ENCODE measurements at regions of chr2 and their contacts with region 1.

Region 1: DNA sequence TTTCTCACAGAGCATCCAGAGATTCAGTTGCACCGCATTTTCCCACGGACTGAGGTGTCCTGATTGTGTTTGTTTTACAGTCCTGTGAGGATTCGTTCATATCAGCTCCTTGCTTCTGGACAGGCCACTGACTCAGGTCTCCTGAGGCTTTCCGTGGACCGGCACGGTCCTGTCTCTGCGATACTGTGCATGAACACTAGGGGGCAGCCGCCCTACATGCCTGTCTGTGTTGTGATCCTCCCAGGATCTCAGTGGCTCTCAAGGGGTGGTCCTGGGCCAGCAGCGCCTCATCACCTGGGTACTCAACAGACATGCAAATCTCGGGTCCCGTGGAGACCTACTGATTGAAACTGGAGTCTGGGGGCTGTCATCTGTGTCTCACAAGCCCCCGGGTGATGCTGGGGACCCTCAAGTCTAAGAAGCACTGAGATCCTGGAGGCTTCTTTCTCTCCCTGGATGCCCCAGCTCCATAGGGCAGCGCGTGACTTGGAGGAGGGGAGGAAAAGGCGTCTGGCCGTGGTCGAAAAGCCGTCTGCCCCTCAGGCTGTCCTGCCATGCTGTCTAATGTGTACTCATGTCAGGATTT is 28.9 kb downstream of the IL1R2 start:
- DNase-seq: peak; percentile 91
- ATAC-seq: peak; percentile 64
- H3K4me3 ChIP-seq: no peak overlapping the region
- H3K27ac ChIP-seq: no peak overlapping the region
- H3K4me1 ChIP-seq: peaks cover 23% of the 10 kb centered on the region
- H3K27me3 ChIP-seq: no peaks in the 10 kb centered on the region
- CTCF ChIP-seq: peak; percentile 98

Region 2: DNA sequence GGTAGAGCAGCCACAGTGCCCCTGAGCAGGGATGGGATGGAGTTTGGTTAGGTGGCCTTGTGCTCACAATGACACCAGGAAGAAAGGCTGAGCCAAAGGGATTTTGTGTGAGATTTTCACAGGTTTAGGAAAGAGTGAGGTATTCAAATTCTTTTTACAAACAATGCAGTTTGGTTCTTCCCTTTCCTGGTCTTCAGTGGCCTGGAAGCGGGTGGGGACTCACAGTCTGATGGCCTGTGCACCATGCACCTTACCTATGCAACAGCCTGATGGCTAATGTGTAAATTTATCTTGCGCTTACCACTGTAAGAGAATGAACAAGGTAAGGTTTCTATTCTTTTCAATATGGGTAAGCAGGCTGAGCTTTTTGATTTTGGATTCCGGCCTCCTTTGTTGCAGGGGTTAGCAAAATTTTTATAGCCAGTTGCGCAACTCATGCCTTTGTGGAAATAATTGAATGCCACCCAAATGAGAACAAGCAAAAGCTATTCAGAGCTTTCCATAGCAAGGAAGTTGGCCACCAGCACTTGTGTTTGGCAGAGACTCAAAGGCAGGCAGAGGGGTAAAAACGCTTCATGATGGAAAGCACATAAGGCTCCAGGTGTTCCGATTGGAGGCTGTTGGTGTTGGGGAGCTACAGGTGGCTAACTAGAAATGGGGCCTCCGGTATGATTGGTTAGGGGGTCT is 52.7 kb before region 1 on chr2:
- CTCF ChIA-PET with region 1: no interaction called
- POLR2A ChIA-PET with region 1: no interaction called
- intact Hi-C with region 1: no loop called
- DNase-seq: peak; percentile 41
- ATAC-seq: no peak
- H3K4me3 ChIP-seq: no peak overlapping the region
- H3K27ac ChIP-seq: no peak overlapping the region
- H3K4me1 ChIP-seq: peaks cover 2% of the 10 kb centered on the region
- H3K27me3 ChIP-seq: no peaks in the 10 kb centered on the region
- CTCF ChIP-seq: no peak

Region 3: GRCh38 chr2:101983928-101984327 is 36.8 kb before region 1 on chr2:
- CTCF ChIA-PET with region 1: no interaction called
- POLR2A ChIA-PET with region 1: no interaction called
- intact Hi-C with region 1: loop called (anchors 1 kb)
- DNase-seq: peak; percentile 61
- ATAC-seq: peak; percentile 44
- H3K4me3 ChIP-seq: 0 out of 2 replicates have a peak overlapping the region, but pooled peaks have one; percentile 12
- H3K27ac ChIP-seq: peak overlapping the region; percentile 98
- H3K4me1 ChIP-seq: peaks cover 47% of the 10 kb centered on the region
- H3K27me3 ChIP-seq: no peaks in the 10 kb centered on the region
- CTCF ChIP-seq: peak; percentile 70

Region 4: GRCh38 chr2:102005989-102006885 is 14.5 kb before region 1 on chr2:
- CTCF ChIA-PET with region 1: interaction called, 4 read pairs
- POLR2A ChIA-PET with region 1: interaction called, 10 read pairs
- intact Hi-C with region 1: no loop called
- DNase-seq: peak; percentile 63
- ATAC-seq: peak; percentile 78
- H3K4me3 ChIP-seq: no peak overlapping the region
- H3K27ac ChIP-seq: no peak overlapping the region
- H3K4me1 ChIP-seq: peaks cover 15% of the 10 kb centered on the region
- H3K27me3 ChIP-seq: no peaks in the 10 kb centered on the region
- CTCF ChIP-seq: peak; percentile 83

Region 5: DNA sequence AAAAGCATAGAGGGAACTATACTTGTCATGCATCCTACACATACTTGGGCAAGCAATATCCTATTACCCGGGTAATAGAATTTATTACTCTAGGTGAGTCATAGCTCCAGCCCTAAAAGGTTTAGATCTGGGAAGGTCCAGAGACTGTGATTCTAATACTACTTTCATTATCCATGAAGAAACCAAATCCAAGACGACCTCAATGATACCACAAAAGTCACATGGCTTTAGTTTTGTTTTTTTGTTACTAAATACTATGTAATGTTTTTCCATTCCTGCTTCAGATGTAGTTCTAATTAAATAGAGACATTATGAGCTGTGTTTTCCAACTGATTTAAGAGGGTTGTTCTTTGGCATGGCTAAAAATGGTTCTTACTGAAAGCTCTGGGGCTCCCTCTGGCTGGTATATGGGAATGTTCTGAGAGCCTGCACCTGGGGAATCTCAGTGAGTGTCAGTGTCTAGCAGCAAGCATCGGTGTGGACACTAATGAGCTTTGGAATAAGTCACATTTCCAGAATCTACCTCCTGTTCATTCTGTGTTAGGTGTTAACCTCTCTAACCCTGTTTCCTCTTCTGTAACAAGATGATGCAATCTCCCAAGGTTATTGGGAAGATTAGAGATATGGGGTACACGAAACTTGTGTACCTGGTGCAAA is 145.6 kb after region 1 on chr2:
- CTCF ChIA-PET with region 1: interaction called, 29 read pairs
- POLR2A ChIA-PET with region 1: no interaction called
- intact Hi-C with region 1: loop called (anchors 1 kb)
- DNase-seq: peak; percentile 65
- ATAC-seq: peak; percentile 96
- H3K4me3 ChIP-seq: no peak overlapping the region
- H3K27ac ChIP-seq: 0 out of 2 replicates have a peak overlapping the region, but pooled peaks have one; percentile 6
- H3K4me1 ChIP-seq: peaks cover 15% of the 10 kb centered on the region
- H3K27me3 ChIP-seq: no peaks in the 10 kb centered on the region
- CTCF ChIP-seq: peak; percentile 79

Region 6: DNA sequence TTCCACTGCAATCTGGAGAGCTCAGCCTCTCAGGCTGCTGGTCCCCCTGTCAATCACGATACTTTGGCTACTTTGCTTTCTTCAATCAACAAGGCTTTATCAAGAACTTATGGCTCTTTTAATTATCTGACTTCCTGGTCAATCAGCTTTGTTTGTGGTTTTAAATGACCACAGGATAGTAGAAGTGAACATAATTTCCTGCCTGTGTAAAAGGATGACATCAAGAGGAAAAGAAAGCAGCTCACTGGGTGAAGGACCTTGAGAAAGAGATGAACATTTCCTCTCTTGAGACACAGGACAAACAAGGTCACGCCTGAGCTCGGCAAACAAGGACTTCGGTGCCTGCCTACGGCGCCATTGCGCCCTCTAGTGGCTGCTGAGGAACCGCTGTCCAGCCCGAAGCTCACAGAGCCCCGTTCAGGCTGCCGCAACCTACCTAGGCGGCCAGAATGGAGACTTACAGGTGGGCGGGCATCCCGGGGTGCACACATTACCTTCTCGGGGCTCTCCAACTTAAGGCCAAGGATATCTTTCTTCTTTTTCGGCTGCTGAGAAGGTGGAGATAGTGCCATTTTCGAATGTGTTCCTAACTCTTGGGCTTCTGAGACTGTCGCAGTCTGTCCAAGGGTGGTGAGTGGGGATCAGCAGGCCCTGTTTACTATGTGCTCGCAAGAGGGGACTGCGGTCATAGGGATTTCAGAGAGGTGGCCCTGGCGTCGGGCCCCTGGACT is 220.1 kb after region 1 on chr2:
- CTCF ChIA-PET with region 1: interaction called, 13 read pairs
- POLR2A ChIA-PET with region 1: no interaction called
- intact Hi-C with region 1: loop called (anchors 1 kb)
- DNase-seq: peak; percentile 91
- ATAC-seq: peak; percentile 97
- H3K4me3 ChIP-seq: no peak overlapping the region
- H3K27ac ChIP-seq: peak overlapping the region; percentile 54
- H3K4me1 ChIP-seq: peaks cover 19% of the 10 kb centered on the region
- H3K27me3 ChIP-seq: no peaks in the 10 kb centered on the region
- CTCF ChIP-seq: peak; percentile 97

Region 7: GRCh38 chr2:102355526-102356380 is 335.1 kb after region 1 on chr2 and contains the start of gene IL18R1:
- CTCF ChIA-PET with region 1: no interaction called
- POLR2A ChIA-PET with region 1: no interaction called
- intact Hi-C with region 1: loop called (anchors 10 kb)
- DNase-seq: peak; percentile 82
- ATAC-seq: peak; percentile 98
- H3K4me3 ChIP-seq: peak within 1 kb of the TSS; percentile 91
- H3K27ac ChIP-seq: peak within 1 kb of the TSS; percentile 31; the same call in 1 of the 2 replicates
- H3K4me1 ChIP-seq: peaks cover 6% of the 10 kb centered on the region; the same call in 1 of the 2 replicates
- H3K27me3 ChIP-seq: no peaks in the 10 kb centered on the region
- CTCF ChIP-seq: peak; percentile 90
- total RNA-seq, gene IL18R1: 1.2 and 3.6 TPM in 2 replicates

Region 8: GRCh38 chr2:102449370-102449974 is 428.8 kb after region 1 on chr2:
- CTCF ChIA-PET with region 1: no interaction called
- POLR2A ChIA-PET with region 1: no interaction called
- intact Hi-C with region 1: loop called (anchors 5 kb)
- DNase-seq: peak; percentile 65
- ATAC-seq: peak; percentile 55
- H3K4me3 ChIP-seq: no peak overlapping the region
- H3K27ac ChIP-seq: no peak overlapping the region
- H3K4me1 ChIP-seq: no peaks in the 10 kb centered on the region
- H3K27me3 ChIP-seq: 0 out of 2 replicates have a peak, but pooled peaks cover 1% of the 10 kb centered on the region
- CTCF ChIP-seq: peak; percentile 89